Heart right ventricle (tissue), 16 donors: ENCODE measurements at regions of chr10 and their contacts with region 1.

Region 1: DNA sequence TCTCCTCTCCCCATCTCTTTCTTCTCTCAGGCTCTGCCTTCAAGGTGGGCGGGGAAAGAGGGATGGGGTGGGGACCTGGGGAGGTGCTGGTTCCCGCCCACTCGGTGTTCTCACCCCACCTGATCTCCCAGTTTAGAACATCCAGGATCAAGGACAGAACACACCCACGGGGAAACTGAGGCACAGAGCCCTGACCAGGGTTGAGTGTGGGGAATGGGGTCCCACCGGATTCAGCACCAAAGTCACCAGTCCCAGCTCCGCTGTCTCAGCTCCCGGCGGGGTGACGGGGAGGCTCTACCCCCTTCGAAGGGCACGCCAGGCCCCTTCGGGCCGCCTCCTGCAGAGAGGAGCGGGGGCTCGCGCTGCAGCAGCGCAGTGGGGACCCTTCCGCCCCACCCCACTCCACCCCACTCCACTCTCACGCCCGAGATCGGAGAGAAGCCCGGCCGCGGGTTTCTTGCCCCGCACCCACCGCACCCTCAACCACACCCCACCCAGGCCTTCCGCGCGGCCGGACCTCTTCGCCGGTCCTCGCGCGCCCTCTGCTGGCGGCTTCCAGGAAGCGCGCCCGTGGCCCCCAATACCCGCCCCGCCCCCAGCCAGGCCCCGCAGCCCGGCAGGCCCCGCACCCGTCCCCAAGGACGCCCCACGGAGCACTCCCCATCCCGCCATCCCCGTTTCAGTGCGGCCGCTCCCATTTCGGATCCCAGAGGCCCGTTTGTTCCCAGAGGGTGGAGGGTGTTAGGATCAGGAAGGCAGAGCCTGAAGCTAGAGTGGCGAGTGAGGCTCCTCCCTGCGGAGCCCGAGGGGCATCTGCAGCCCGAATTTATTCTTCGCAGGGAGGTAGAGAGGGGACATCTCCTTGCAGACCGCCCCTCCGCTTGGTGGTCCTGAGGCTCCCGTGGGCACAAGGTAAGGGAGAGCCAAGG is 18.0 kb downstream of the POLL start:
- DNase-seq: peak; percentile 61 to 85
- ATAC-seq: peak; percentile 72 to 93 (median 90)
- H3K4me3 ChIP-seq: peak overlapping the region; percentile 41 to 79 (median 56)
- H3K27ac ChIP-seq: peak overlapping the region in 1 of 10 donors; percentile 51
- H3K4me1 ChIP-seq: peaks cover 8 to 30% (median 21%) of the 10 kb centered on the region in 9 donors
- H3K27me3 ChIP-seq: peaks cover 7 to 50% (median 44%) of the 10 kb centered on the region in 7 donors
- CTCF ChIP-seq: peak; percentile 90 to 97 (median 94)

Region 2: GRCh38 chr10:101161494-101162299 is 408.4 kb before region 1 on chr10:
- intact Hi-C with region 1: loop called in 2 of 10 experiments (anchors 5 kb)
- DNase-seq: peak; percentile 46 to 73
- ATAC-seq: peak; percentile 85 to 94 (median 90)
- H3K4me3 ChIP-seq: peak overlapping the region in 8 of 10 donors; percentile 11 to 47 (median 30)
- H3K27ac ChIP-seq: no peak overlapping the region
- H3K4me1 ChIP-seq: peaks cover 0 to 9% (median 4%) of the 10 kb centered on the region in 9 donors
- H3K27me3 ChIP-seq: peaks cover 0 to 96% (median 75%) of the 10 kb centered on the region in 7 donors
- CTCF ChIP-seq: peak; percentile 93 to 98 (median 97)

Region 3: DNA sequence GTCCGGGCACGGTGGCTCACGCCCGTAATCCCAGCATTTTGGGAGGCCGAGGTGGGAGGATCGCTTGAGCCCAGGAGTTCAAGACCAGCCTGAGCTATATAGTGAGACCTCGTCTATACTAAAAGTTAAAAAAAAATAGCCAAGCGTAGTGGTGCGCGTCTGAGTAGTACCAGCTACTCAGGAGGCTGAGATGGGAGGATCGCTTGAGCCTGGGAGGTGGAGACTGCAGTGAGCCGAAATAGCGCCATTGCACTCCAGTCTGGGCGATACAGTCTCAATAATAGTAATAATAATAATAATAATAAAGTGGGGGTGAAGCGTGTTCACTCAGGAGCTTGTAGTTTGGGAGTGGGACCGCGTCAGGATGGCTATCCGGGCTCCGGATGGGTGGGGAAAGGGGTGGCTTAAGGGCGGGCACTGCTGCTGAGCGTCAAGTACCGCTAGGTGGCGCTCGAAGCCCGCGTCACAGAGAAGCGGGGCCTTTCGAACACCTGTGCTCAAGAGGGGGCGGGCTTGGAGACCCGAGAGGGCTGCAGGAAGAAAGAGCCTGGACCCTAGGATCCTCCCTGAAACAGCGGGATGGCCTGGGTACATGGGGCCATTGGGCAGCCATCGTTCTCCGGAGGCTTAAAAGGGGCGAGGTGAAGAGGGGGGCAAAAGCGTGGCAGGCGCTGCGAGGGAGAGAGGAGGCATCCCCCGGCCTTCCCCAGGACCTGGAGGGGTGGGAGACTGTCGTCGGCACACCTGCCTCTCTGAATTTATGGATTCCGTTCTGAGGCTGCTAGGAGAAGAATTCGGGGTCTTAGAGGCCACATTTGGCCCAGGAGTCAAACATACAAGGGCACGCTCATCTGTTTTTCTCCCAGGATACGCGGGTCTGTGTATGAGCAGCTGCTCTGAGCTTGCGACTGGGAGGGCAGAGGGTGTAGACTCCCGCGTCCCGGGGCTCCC is 355.4 kb before region 1 on chr10:
- intact Hi-C with region 1: loop called (anchors 1 to 5 kb)
- DNase-seq: peak; percentile 43 to 65
- ATAC-seq: peak; percentile 66 to 93 (median 84)
- H3K4me3 ChIP-seq: peak overlapping the region in 1 of 10 donors; percentile 8
- H3K27ac ChIP-seq: no peak overlapping the region
- H3K4me1 ChIP-seq: peaks cover 14 to 47% (median 42%) of the 10 kb centered on the region in 9 donors
- H3K27me3 ChIP-seq: peaks cover 58 to 100% (median 100%) of the 10 kb centered on the region in 7 donors
- CTCF ChIP-seq: peak; percentile 68 to 94 (median 89)

Region 4: DNA sequence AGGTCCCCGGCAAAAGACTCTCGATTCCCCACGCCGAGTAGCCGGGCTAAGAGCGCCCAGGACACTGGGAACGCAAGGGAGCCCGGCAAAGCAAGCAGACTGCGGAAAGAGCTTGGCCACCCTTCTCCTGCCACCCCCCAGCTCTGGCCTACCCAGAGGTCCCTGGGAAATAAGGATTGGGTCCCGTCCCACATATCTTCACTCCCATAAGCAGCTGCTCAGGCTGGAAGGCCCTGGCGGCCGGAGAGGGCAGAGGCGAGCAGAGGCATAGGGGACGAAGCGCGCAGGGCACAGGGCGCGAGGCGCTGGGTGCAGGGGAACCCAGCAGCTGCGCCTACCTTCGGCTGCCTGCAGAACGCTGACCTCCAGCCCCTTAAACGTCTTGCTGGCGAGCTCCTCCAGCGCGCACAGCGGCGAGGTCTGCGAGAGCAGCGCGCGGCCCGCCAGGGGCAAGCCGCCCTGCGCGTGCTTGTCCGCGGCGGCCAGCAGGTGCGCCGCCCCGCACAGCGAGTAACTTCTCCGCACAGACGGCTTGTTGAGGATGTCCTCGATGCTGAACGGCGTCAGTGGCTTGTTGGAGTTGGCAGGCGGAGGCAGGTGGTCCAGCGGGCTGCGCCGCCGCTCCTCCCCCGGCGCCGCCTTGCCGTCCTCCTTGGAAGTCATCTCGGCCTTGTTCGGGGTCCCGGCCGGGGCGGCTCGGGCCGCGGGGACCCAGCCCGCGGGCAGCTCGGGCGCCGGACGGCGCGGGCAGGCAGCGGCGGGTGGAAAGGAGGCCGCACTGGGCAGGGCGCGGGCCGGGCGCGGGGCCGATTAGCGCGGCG is 341.7 kb before region 1 on chr10:
- intact Hi-C with region 1: no loop called
- DNase-seq: no peak
- ATAC-seq: peak in 2 of 8 donors; percentile 18 to 39
- H3K4me3 ChIP-seq: peak overlapping the region in 2 of 10 donors; percentile 31 to 35
- H3K27ac ChIP-seq: no peak overlapping the region
- H3K4me1 ChIP-seq: peaks cover 18 to 67% (median 56%) of the 10 kb centered on the region in 9 donors
- H3K27me3 ChIP-seq: peaks cover 91 to 100% (median 100%) of the 10 kb centered on the region in 7 donors
- CTCF ChIP-seq: no peak

Region 5: GRCh38 chr10:101272229-101272868 is 297.8 kb before region 1 on chr10:
- intact Hi-C with region 1: loop called in 4 of 10 experiments (anchors 5 to 10 kb)
- DNase-seq: peak; percentile 44 to 49
- ATAC-seq: peak; percentile 67 to 86 (median 79)
- H3K4me3 ChIP-seq: no peak overlapping the region
- H3K27ac ChIP-seq: no peak overlapping the region
- H3K4me1 ChIP-seq: no peaks in the 10 kb centered on the region
- H3K27me3 ChIP-seq: peaks cover 0 to 37% (median 23%) of the 10 kb centered on the region in 7 donors
- CTCF ChIP-seq: peak; percentile 48 to 82 (median 79)

Region 6: DNA sequence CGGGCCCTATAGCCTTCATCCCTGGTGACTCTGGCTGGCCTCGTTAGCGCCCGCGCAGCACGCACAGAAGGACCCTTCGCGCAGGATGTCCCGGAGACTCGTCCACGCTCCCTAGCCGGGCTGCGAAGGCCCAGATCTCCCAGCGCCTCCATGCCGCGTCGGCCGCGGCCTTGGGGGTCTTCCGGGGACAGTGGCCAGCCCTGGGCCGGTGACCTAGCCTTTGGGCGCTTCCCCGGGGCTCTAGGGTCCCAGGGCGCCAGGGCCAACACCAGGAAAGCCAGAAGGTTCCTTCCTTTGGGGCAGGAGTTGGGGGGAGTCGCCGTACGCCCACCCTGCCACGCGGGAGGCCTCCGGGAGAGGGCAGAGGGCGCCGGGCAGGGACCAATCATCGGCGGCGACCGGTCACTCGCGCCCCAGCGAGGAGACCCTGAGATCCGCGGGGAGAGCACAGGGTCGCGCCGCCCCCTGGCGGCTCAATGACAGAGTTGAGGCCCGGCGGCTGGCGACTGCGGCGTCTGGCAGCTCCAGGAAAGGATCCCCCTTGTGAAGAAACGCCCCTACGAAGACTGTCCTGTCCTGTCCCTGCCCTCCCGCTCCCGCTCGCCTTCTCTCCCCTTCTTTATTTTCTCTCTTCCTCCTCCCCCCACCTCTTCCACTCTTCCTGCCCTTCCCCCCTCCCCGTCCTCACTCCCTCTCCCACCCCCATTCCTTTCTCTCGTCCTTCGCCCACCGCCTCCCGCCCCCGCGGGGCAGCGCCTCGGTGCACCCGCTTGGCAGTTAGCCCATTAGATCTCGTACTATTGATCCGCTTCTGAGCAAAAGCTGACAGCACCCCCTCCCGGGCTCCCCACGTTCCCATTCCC is 278.5 kb before region 1 on chr10:
- intact Hi-C with region 1: loop called in 4 of 10 experiments (anchors 10 kb)
- DNase-seq: peak; percentile 59 to 69
- ATAC-seq: peak; percentile 76 to 84 (median 80)
- H3K4me3 ChIP-seq: peak overlapping the region; percentile 41 to 67 (median 62)
- H3K27ac ChIP-seq: peak overlapping the region in 6 of 10 donors; percentile 53 to 81 (median 68)
- H3K4me1 ChIP-seq: peaks cover 0 to 22% (median 12%) of the 10 kb centered on the region in 9 donors
- H3K27me3 ChIP-seq: peaks cover 5 to 97% (median 68%) of the 10 kb centered on the region in 7 donors
- CTCF ChIP-seq: peak; percentile 32 to 78 (median 68)

Region 7: GRCh38 chr10:101297901-101298486 is 272.1 kb before region 1 on chr10:
- intact Hi-C with region 1: loop called in 6 of 10 experiments (anchors 5 to 10 kb)
- DNase-seq: peak; percentile 43 to 47
- ATAC-seq: peak in 6 of 8 donors; percentile 15 to 55 (median 39)
- H3K4me3 ChIP-seq: no peak overlapping the region
- H3K27ac ChIP-seq: no peak overlapping the region
- H3K4me1 ChIP-seq: peaks cover 0 to 16% (median 3%) of the 10 kb centered on the region in 9 donors
- H3K27me3 ChIP-seq: peaks cover 0 to 52% (median 31%) of the 10 kb centered on the region in 7 donors
- CTCF ChIP-seq: peak; percentile 61 to 87 (median 82)

Region 8: DNA sequence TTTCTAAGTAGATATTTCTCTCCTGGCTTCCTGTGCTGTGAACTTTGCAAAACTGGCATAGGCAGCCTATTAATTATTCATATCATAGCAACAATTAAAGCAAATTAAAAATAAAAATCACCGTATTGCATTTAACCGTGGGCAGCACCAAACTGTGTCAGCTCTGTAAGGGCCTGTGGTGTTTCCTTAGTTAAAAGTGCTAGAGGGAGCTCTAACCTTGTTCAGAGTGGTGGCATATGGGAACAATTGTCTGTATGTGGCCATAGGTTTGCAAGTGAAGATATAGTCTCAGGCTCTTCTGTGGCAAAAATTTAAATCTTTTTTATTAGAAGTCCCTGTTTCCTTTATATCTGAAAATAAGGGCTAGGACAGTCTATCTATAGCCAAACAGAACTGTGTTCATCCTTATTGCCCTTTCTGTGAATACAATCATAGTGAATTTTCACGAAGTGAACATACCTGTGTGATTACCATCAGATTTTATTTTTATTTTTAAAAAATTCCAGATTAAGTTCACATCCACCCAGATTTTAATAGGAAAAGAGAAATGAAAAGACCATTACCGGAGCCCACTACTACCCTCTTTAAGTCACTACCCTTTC is 74.7 kb before region 1 on chr10:
- intact Hi-C with region 1: no loop called
- DNase-seq: no peak
- ATAC-seq: no peak
- H3K4me3 ChIP-seq: no peak overlapping the region
- H3K27ac ChIP-seq: no peak overlapping the region
- H3K4me1 ChIP-seq: peaks cover 0 to 3% (median 0%) of the 10 kb centered on the region in 9 donors
- H3K27me3 ChIP-seq: no peaks in the 10 kb centered on the region
- CTCF ChIP-seq: peak in 5 of 9 donors; percentile 6 to 43 (median 33)

Region 9: GRCh38 chr10:101529725-101530553 is 40.2 kb before region 1 on chr10:
- intact Hi-C with region 1: loop called in 1 of 10 experiments (anchors 5 kb)
- DNase-seq: no peak
- ATAC-seq: peak in 2 of 8 donors; percentile 35 to 68
- H3K4me3 ChIP-seq: no peak overlapping the region
- H3K27ac ChIP-seq: no peak overlapping the region
- H3K4me1 ChIP-seq: peaks cover 0 to 3% (median 0%) of the 10 kb centered on the region in 9 donors
- H3K27me3 ChIP-seq: no peaks in the 10 kb centered on the region
- CTCF ChIP-seq: no peak